Caco-2 (cell line): ENCODE measurements at regions of chr1 and their contacts with region 1.

Region 1: DNA sequence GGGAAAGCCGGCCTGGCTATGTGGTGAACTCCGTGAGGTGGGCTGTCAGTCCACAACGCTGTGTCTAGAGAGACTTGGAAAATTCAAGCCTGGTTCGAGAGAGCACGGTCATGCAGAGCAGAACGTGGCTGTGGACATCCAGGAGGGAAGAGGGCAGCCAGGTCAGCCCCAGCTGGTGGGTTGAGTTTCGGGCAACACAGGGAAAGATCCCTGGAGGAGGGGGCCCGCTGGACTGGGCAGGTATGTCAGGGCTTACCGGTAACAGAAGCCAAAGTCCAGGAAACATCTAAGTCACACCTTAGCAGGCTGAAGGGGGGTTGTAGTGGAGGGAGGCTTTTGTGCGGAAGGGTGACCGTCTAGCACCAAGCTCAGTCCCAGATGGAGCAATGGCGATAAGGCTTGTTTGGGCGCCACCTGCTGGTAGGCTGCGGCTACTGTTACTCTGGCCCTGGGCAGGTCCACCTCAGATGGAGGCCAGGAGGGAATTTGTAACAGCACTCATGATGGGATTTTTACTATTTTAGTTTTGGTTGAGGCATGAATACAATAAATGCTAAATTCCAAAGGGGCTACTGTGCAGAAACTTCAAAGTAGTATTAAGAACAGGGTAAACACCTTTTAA is 143.3 kb upstream of the ZNF644 start:
- DNase-seq: peak; percentile 71 to 83
- H3K4me3 ChIP-seq: no peak overlapping the region
- H3K4me3 Mint-ChIP-seq: no peak overlapping the region
- H3K27ac Mint-ChIP-seq: no peak overlapping the region
- H3K4me1 ChIP-seq: no peaks in the 10 kb centered on the region
- H3K4me1 Mint-ChIP-seq: peaks cover 14% of the 10 kb centered on the region
- H3K27me3 ChIP-seq: no peaks in the 10 kb centered on the region
- H3K27me3 Mint-ChIP-seq: no peaks in the 10 kb centered on the region
- CTCF ChIP-seq: peak; percentile 72 to 87

Region 2: DNA sequence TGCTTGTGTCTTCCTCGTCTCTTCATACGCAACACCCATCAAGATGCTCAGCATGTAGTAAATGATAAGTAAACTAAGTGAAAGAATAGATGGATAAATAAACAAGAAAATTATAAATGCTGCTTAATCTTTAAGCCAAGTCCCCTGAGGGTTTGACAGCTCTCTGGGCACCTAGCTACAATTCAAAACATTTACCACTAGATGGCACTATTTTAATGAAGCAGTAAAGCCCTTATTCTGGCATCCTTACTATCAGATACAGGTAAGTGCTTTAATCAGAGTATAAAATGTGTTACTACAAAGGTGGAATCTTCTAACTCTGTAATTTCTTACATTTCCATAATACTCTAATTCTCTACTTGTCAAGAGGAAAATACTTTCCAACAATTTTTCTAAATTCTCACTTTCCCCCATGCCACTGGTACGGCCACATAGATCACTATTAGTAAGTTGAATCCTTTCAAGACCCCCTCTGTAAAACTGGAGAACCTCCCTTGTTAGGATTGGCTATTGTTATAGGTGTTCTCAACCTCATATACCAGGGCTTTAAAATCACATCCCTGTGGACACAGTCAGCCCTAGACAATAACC is 585.8 kb before region 1 on chr1:
- CTCF ChIA-PET with region 1: no interaction called
- POLR2A ChIA-PET with region 1: no interaction called
- intact Hi-C with region 1: loop called (anchors 10 kb)
- DNase-seq: peak in 1 of 2 experiments; percentile 7
- H3K4me3 ChIP-seq: no peak overlapping the region
- H3K4me3 Mint-ChIP-seq: no peak overlapping the region
- H3K27ac Mint-ChIP-seq: no peak overlapping the region
- H3K4me1 ChIP-seq: no peaks in the 10 kb centered on the region
- H3K4me1 Mint-ChIP-seq: no peaks in the 10 kb centered on the region
- H3K27me3 ChIP-seq: no peaks in the 10 kb centered on the region
- H3K27me3 Mint-ChIP-seq: peaks cover 3% of the 10 kb centered on the region
- CTCF ChIP-seq: peak; percentile 16 to 33

Region 3: DNA sequence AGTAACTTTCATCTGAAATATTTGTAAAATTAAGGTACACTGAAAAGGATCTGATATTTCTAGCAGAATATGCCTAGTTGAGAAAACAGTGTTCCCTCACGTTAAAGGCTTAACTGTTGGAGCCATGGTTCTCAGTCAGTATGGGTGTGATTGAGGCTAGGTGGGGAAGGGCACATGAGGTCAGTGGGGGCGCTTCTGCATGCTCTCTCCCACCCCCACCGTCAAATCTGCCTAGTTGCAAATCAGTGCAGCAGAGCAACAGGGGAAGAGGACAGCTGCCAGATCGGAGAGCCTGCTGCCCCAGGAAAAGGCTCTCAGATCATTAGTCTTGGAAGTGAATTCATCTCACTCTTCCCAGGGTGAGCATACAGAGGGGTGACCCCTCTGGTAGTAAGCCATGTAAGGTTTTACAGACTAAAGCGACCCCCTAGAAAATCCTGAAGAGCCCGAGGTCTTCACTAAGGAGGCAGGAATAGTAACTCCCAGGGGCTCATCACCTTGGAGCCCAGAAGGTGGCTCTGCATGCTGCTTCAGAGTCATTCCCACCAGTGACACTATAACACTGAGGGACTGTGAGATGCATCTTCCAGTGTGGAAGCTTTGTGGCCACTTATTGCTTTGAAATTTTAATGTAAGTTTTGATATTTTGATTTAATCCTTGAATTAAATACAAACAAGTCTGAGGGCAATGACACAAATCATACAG is 365.0 kb before region 1 on chr1:
- CTCF ChIA-PET with region 1: no interaction called
- POLR2A ChIA-PET with region 1: no interaction called
- intact Hi-C with region 1: loop called (anchors 1 kb)
- DNase-seq: peak in 1 of 2 experiments; percentile 1
- H3K4me3 ChIP-seq: no peak overlapping the region
- H3K4me3 Mint-ChIP-seq: no peak overlapping the region
- H3K27ac Mint-ChIP-seq: no peak overlapping the region
- H3K4me1 ChIP-seq: no peaks in the 10 kb centered on the region
- H3K4me1 Mint-ChIP-seq: no peaks in the 10 kb centered on the region
- H3K27me3 ChIP-seq: no peaks in the 10 kb centered on the region
- H3K27me3 Mint-ChIP-seq: peaks cover 5% of the 10 kb centered on the region
- CTCF ChIP-seq: no peak

Region 4: GRCh38 chr1:91124989-91125417 is 40.1 kb before region 1 on chr1:
- CTCF ChIA-PET with region 1: interaction called, 10 read pairs
- POLR2A ChIA-PET with region 1: no interaction called
- intact Hi-C with region 1: no loop called
- DNase-seq: no peak
- H3K4me3 ChIP-seq: no peak overlapping the region
- H3K4me3 Mint-ChIP-seq: no peak overlapping the region
- H3K27ac Mint-ChIP-seq: no peak overlapping the region
- H3K4me1 ChIP-seq: peaks cover 12% of the 10 kb centered on the region
- H3K4me1 Mint-ChIP-seq: peaks cover 10% of the 10 kb centered on the region
- H3K27me3 ChIP-seq: no peaks in the 10 kb centered on the region
- H3K27me3 Mint-ChIP-seq: no peaks in the 10 kb centered on the region
- CTCF ChIP-seq: no peak

Region 5: DNA sequence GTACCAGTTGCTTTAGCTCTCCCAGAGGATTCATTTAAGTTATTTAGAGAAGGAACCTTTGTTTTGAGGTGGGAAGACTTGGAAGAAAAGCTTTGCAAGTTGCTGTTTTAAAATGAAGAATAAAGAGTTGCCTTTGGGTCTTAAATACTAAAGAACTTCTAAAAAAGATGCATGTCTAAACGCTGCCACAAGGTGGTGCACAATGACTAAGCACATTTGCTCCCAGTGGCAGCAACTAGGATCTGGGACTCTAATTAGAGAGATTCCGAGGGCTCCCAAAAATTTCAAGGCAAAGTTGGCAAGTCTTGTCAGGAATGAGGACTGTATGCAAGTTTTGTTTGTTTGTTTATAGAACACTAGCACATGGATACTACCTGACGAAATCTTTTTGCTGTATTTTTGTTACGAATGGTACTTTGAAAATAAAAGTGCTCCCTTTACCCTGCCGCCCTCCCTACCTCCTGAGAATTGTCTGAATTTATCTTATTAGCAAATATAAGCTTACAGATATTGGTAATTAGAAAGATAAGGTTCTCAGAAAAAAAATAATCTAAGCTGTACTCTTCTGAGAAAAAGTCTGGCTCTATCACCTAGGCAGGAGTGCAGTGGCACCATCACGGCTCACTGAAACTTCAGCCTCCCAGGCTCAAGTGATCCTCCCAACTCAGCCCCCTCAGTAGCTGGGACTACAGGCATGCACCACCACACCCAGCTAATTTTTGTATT is 117.7 kb after region 1 on chr1:
- CTCF ChIA-PET with region 1: interaction called, 36 read pairs
- POLR2A ChIA-PET with region 1: no interaction called
- intact Hi-C with region 1: loop called (anchors 1 kb)
- DNase-seq: peak; percentile 41 to 53
- H3K4me3 ChIP-seq: no peak overlapping the region
- H3K4me3 Mint-ChIP-seq: no peak overlapping the region
- H3K27ac Mint-ChIP-seq: no peak overlapping the region
- H3K4me1 ChIP-seq: no peaks in the 10 kb centered on the region
- H3K4me1 Mint-ChIP-seq: no peaks in the 10 kb centered on the region
- H3K27me3 ChIP-seq: no peaks in the 10 kb centered on the region
- H3K27me3 Mint-ChIP-seq: no peaks in the 10 kb centered on the region
- CTCF ChIP-seq: peak; percentile 57 to 63

Region 6: DNA sequence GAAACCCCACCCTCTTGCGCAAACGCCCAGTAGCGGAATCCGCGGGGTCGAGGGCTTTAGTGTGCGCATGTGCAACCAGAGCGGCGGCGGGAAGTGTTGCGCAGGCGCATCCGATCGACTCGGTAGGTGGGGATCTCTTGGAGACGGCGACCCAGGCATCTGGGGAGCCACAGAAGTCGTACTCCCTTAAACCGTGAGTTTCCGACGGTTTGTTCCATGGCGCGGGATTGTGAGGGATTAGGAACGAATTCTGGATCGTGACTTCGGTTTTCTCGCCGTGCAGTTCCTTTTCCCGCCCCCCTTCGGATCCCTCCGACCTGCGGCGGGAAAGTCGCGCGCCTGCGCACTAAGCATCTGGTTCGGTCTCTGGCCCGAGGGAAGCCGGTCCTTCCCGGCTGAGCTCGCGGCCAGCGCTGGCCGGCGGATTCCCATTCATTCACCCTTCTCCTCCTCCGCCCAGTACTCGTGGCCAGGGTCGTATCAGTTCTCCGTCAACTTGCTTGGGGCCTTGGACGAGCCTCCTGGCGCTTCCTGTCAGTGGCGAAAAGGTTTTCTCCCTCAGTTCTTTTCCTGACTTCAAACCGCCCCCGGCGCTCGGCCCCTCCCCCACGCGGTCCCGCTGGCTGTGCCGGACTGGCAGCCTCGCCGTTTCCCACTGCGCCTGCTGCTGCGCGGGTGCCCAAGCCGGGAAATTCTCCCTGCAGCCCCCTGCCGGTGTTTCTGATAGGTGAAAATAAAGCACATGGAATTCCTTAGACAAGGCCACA is 335.8 kb after region 1 on chr1 and contains the start of gene CDC7:
- CTCF ChIA-PET with region 1: interaction called, 4 read pairs
- POLR2A ChIA-PET with region 1: no interaction called
- intact Hi-C with region 1: loop called (anchors 5 kb)
- DNase-seq: peak; percentile 90 to 92
- H3K4me3 ChIP-seq: peak within 1 kb of the TSS; percentile 54
- H3K4me3 Mint-ChIP-seq: no peak within 1 kb of the TSS
- H3K27ac Mint-ChIP-seq: no peak within 1 kb of the TSS
- H3K4me1 ChIP-seq: peaks cover 11% of the 10 kb centered on the region
- H3K4me1 Mint-ChIP-seq: peaks cover 18% of the 10 kb centered on the region
- H3K27me3 ChIP-seq: no peaks in the 10 kb centered on the region
- H3K27me3 Mint-ChIP-seq: no peaks in the 10 kb centered on the region
- CTCF ChIP-seq: peak; percentile 38 to 64
- total RNA-seq, gene CDC7: 17.6 and 19.4 TPM in 2 replicates